ENCODE measurements at regions of chr7 and their contacts with region 1.

Region 1: DNA sequence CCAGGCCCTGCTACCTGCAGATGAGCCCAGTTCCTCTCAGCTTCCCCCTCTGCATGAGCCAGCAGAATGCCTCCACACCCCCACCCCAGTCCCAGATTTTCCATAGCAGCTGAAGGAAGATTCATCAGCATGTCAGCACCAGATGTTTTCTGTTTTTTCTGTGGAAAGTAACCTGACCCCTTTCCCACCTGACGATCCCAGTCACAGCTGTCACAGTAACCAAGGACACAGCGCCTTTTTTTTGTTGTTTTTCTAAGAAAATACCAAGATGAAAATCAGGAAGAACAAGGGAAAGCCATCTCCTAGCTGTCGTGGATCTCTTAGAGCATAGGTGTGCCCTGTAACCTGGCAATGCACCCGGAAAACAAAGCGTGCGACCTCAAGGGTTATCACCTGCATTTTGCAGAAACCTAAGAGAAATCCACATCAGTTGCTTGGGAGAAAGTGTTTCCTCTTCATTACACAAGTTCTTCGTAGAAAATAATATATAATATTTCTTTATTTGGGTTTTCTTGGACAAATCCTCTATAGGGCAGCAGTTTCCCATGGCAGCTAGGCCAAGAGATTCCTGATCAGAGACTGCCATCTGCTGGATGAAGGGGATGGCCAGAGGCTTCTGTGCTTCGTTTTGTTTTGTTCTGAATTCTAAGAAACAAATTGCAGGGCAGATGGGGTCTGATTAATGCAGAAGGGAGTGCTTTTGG is 401.9 kb downstream of the TNS3 start:
- DNase-seq: peak; percentile 73
- H3K4me3 ChIP-seq: no peak overlapping the region; a peak in 1 of 4 replicates
- H3K27ac ChIP-seq: no peak overlapping the region
- H3K4me1 ChIP-seq: no peaks in the 10 kb centered on the region; a peak in 1 of 4 replicates
- H3K27me3 ChIP-seq: peaks cover 16% of the 10 kb centered on the region; the same call in 1 of the 2 replicates
- CTCF ChIP-seq: peak; percentile 99
- EP300 ChIP-seq: no peak
- RAD21 ChIP-seq: peak; percentile 99

Region 2: DNA sequence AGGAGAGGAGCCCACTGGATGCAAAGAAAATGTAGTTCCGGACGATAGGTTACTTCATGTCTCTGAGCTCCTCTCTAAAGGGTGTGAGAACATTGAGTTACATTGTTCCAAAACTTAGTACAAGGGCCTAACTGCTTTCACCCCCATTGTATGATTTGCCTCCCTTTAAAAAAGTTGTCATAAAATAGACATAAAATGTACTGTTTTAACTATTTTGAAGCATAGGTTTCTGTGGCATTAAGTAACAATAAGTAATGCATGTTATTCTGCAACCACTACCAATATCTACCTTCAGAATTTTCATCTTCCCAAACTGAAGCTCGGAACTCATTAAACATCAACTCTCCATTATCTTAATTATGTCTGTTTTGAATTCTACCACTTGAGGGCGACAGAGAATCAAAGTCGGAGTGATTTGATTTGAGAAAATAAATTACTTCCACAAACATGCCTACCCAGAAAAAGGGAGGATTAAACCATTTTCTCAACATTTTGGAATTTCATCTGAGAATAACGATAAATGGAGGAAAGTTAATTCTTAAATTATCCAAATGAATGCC is 1289.0 kb before region 1 on chr7:
- CTCF ChIA-PET with region 1: interaction called, 19 read pairs
- POLR2A ChIA-PET with region 1: no interaction called
- DNase-seq: peak; percentile 58
- H3K4me3 ChIP-seq: no peak overlapping the region
- H3K27ac ChIP-seq: no peak overlapping the region
- H3K4me1 ChIP-seq: peaks cover 0 to 8% of the 10 kb centered on the region in 2 experiments; a peak in 1 of 4 replicates
- H3K27me3 ChIP-seq: peaks cover 12% of the 10 kb centered on the region; the same call in 1 of the 2 replicates
- CTCF ChIP-seq: peak; percentile 97
- EP300 ChIP-seq: no peak
- RAD21 ChIP-seq: peak; percentile 76

Region 3: DNA sequence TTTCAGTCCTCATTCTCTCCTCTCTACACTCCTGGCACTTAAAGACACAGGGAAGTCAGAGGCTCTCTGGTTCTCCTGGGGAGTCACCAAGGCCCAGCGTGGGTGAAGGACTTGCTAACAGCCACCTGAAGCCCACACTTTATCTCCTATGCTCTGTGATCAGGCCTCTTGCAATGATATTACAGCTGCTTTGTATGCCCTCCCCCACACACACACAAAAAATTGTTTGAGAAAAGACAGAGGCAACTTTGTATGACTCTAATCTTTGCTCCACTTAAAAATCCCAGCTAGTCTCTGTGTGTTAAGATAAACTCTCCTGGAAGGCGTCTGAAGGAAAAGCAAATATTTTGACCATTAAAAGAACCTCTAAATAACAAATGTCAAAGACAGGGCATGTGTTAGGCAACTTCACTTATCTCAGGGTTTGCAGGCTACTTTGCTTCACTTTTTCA is 105.2 kb before region 1 on chr7:
- CTCF ChIA-PET with region 1: no interaction called
- POLR2A ChIA-PET with region 1: no interaction called
- DNase-seq: no peak
- H3K4me3 ChIP-seq: no peak overlapping the region
- H3K27ac ChIP-seq: no peak overlapping the region
- H3K4me1 ChIP-seq: no peaks in the 10 kb centered on the region
- H3K27me3 ChIP-seq: no peaks in the 10 kb centered on the region
- CTCF ChIP-seq: no peak
- EP300 ChIP-seq: no peak
- RAD21 ChIP-seq: no peak

Region 4: GRCh38 chr7:47195641-47196040 is 15.7 kb after region 1 on chr7:
- CTCF ChIA-PET with region 1: interaction called, 28 read pairs
- POLR2A ChIA-PET with region 1: no interaction called
- DNase-seq: peak; percentile 34
- H3K4me3 ChIP-seq: no peak overlapping the region
- H3K27ac ChIP-seq: no peak overlapping the region
- H3K4me1 ChIP-seq: peaks cover 0 to 2% of the 10 kb centered on the region in 2 experiments; a peak in 1 of 4 replicates
- H3K27me3 ChIP-seq: peaks cover 31% of the 10 kb centered on the region; the same call in 1 of the 2 replicates
- CTCF ChIP-seq: peak; percentile 51
- EP300 ChIP-seq: no peak
- RAD21 ChIP-seq: no peak

Region 5: GRCh38 chr7:47202146-47202783 is 22.3 kb after region 1 on chr7:
- CTCF ChIA-PET with region 1: interaction called, 28 read pairs
- POLR2A ChIA-PET with region 1: interaction called, 3 read pairs
- DNase-seq: no peak
- H3K4me3 ChIP-seq: no peak overlapping the region
- H3K27ac ChIP-seq: no peak overlapping the region
- H3K4me1 ChIP-seq: no peaks in the 10 kb centered on the region; a peak in 1 of 4 replicates
- H3K27me3 ChIP-seq: peaks cover 11% of the 10 kb centered on the region; the same call in 1 of the 2 replicates
- CTCF ChIP-seq: no peak
- EP300 ChIP-seq: no peak
- RAD21 ChIP-seq: no peak

Region 6: DNA sequence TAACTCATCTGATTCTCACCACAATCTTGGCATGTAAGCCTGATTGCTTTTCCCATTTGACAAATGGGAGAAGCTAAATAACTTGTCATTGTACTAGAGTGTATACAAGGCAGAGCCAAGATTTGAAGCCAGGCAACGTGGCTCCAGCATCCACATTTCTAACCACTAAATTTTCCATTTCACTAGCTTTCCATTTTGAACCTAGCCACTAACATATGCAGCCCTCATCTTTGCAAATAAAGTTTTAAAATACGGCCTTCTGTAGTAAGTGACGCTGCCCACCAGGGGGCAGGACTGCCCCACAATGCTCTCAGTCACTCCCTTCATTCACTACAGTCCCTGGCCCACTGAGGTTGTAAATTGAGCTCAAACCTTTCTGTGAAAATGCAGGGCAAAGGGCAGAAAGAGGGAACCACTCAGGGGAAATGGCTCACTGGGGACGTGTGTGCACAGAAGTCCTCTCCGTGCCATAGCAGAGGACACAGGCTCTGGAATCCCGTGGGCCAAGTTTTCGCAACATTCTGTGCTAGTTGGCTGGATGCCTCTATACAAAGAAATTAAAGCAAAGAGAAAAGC is 86.3 kb after region 1 on chr7:
- CTCF ChIA-PET with region 1: no interaction called
- POLR2A ChIA-PET with region 1: no interaction called
- DNase-seq: peak; percentile 83
- H3K4me3 ChIP-seq: no peak overlapping the region; a peak in 1 of 4 replicates
- H3K27ac ChIP-seq: no peak overlapping the region
- H3K4me1 ChIP-seq: peaks cover 0 to 2% of the 10 kb centered on the region in 2 experiments; a peak in 1 of 4 replicates
- H3K27me3 ChIP-seq: no peaks in the 10 kb centered on the region
- CTCF ChIP-seq: peak; percentile 99
- EP300 ChIP-seq: no peak
- RAD21 ChIP-seq: peak; percentile 100

Region 7: DNA sequence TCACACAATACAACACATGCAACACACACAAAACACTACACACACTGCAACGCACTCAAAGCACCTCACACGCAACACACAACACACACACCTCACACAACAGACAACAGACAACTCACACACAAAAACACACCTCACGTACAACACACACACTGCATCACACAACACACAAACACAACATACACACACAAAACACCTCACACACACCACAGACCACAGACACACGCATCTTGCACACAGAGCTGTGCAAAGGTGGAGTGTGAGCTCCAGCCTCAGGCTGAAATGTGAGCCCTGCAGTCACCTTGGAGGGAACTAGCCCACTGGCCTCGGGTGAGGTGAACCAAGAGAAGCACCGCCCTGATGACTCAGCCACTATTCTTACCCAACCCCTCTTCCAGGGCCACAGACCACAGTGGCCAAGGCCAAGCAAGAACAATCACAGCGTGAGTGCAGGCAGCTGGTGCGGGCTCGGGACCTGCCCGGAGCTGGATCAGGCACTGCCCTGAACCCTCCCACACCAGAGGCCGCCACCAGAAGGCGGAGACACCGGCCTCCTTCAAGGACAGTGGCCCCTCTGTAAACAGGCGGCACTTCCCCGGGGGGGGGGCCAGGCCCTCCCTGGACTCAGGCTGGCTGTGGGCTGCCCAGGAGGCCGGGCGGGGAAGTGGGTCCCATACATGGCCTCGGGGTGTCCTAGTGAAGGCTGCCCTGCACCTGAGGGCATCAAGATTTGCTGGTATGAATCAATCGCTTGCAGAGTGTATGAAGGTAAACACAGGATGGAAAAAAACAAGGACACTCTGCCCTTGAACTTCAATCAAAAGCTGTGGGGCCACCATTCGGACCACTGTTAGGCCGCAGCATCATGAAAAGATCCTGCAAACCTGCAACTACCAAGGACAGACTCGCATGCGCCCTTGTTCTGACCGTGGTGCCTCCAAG is 295.2 kb after region 1 on chr7:
- CTCF ChIA-PET with region 1: no interaction called
- POLR2A ChIA-PET with region 1: no interaction called
- DNase-seq: peak; percentile 64
- H3K4me3 ChIP-seq: no peak overlapping the region; a peak in 1 of 4 replicates
- H3K27ac ChIP-seq: peak overlapping the region in 1 of 2 experiments; percentile 46; a peak in 2 of 4 replicates
- H3K4me1 ChIP-seq: peaks cover 15 to 21% of the 10 kb centered on the region in 2 experiments; a peak in 3 of 4 replicates
- H3K27me3 ChIP-seq: no peaks in the 10 kb centered on the region
- CTCF ChIP-seq: no peak; the same call in 1 of the 2 replicates
- EP300 ChIP-seq: no peak; a peak in 1 of 4 replicates
- RAD21 ChIP-seq: no peak

Measured in SK-N-SH (cell line).